Activated naive CD8-positive, alpha-beta T cell treated with anti-CD3 and anti-CD28 coated beads, Interleukin-2, amount 10 ng/mL, durations not matched to agents 7 days and 5 days (primary cell): ENCODE measurements at regions of chr9 and their contacts with region 1.

Region 1: DNA sequence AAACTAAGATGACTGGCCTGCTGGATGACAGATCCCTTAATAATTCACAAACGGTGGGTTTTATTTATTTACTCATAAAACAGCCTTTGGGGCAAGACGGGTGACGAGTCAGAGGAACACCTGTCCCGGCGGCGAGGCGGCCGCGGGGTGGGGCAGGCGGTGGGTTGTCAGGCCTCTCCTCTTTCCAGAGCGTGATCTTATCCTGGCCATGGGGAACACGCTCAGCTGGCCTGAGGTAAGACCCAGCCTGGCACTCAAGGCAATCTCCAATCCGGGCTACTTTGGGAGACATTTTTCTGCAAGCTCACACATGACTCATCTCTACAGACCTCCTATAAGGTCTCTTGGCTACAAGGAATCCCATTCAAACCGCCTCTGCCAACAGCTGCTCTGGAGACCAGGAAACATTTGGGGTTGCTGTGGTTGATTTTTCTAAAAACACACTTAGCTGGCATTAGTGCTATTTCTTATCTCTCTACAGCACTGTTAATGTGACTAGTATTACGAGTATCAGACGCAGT is 6.3 kb downstream of the RAPGEF1 start:
- DNase-seq: peak; percentile 58
- ATAC-seq: no peak
- H3K4me3 Mint-ChIP-seq: peak overlapping the region; percentile 88
- H3K27ac Mint-ChIP-seq: peak overlapping the region; percentile 98
- H3K4me1 Mint-ChIP-seq: peaks cover 80% of the 10 kb centered on the region
- H3K27me3 Mint-ChIP-seq: no peaks in the 10 kb centered on the region

Region 2: GRCh38 chr9:131668439-131669268 is 64.9 kb before region 1 on chr9:
- POLR2A ChIA-PET with region 1: interaction called, 14 read pairs
- DNase-seq: peak; percentile 59
- ATAC-seq: peak; percentile 72
- H3K4me3 Mint-ChIP-seq: peak overlapping the region; percentile 75
- H3K27ac Mint-ChIP-seq: peak overlapping the region; percentile 98
- H3K4me1 Mint-ChIP-seq: peaks cover 67% of the 10 kb centered on the region
- H3K27me3 Mint-ChIP-seq: no peaks in the 10 kb centered on the region

Region 3: DNA sequence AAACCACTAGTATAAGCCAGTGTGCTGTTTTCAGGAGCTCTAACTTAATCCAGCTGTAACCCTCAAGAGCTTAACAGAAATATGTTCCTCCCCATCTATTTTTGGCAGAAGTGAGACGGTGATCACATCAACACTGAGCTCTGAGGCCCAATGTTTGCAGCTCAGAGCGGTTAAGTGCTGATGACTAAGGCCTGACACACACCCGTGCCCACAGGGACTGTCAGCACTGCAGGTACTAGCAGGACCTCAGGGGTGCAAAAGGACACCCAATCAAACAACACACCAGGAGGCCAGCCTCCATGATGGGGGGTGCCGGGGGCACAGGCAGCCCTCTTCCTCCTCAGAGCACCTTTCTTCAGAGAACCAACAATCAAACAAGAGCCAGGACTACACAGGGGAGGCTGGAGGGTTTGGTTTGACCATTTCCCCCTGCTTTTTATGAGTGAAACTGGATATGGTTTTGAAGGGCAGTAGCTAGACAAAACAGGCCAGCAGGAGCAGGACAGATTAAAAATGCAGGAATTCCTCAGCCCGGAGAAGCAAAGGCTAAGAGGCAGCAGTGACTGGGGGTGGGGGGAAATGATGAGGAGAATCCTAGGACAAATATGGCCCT is 55.0 kb before region 1 on chr9:
- POLR2A ChIA-PET with region 1: interaction called, 42 read pairs
- DNase-seq: peak; percentile 63
- ATAC-seq: peak; percentile 100
- H3K4me3 Mint-ChIP-seq: peak overlapping the region; percentile 54
- H3K27ac Mint-ChIP-seq: peak overlapping the region; percentile 80
- H3K4me1 Mint-ChIP-seq: peaks cover 55% of the 10 kb centered on the region
- H3K27me3 Mint-ChIP-seq: no peaks in the 10 kb centered on the region

Region 4: GRCh38 chr9:131709771-131710454 is 23.7 kb before region 1 on chr9:
- POLR2A ChIA-PET with region 1: interaction called, 14 read pairs
- DNase-seq: no peak
- ATAC-seq: peak; percentile 51
- H3K4me3 Mint-ChIP-seq: peak overlapping the region; percentile 40
- H3K27ac Mint-ChIP-seq: peak overlapping the region; percentile 74
- H3K4me1 Mint-ChIP-seq: peaks cover 49% of the 10 kb centered on the region
- H3K27me3 Mint-ChIP-seq: no peaks in the 10 kb centered on the region